ENCODE measurements at regions of chr3 and their contacts with region 1.

Region 1: GRCh38 chr3:49839193-49839809 is 17.1 kb downstream of the TRAIP start:
- DNase-seq: peak; percentile 75 to 81 (median 78)
- H3K4me3 ChIP-seq: no peak overlapping the region
- H3K4me3 Mint-ChIP-seq: no peak overlapping the region
- H3K27ac ChIP-seq: no peak overlapping the region
- H3K27ac Mint-ChIP-seq: no peak overlapping the region
- H3K4me1 ChIP-seq: no peaks in the 10 kb centered on the region
- H3K4me1 Mint-ChIP-seq: peaks cover 0 to 2% (median under 1%) of the 10 kb centered on the region in 4 donors
- H3K27me3 ChIP-seq: no peaks in the 10 kb centered on the region
- H3K27me3 Mint-ChIP-seq: no peaks in the 10 kb centered on the region

Region 2: DNA sequence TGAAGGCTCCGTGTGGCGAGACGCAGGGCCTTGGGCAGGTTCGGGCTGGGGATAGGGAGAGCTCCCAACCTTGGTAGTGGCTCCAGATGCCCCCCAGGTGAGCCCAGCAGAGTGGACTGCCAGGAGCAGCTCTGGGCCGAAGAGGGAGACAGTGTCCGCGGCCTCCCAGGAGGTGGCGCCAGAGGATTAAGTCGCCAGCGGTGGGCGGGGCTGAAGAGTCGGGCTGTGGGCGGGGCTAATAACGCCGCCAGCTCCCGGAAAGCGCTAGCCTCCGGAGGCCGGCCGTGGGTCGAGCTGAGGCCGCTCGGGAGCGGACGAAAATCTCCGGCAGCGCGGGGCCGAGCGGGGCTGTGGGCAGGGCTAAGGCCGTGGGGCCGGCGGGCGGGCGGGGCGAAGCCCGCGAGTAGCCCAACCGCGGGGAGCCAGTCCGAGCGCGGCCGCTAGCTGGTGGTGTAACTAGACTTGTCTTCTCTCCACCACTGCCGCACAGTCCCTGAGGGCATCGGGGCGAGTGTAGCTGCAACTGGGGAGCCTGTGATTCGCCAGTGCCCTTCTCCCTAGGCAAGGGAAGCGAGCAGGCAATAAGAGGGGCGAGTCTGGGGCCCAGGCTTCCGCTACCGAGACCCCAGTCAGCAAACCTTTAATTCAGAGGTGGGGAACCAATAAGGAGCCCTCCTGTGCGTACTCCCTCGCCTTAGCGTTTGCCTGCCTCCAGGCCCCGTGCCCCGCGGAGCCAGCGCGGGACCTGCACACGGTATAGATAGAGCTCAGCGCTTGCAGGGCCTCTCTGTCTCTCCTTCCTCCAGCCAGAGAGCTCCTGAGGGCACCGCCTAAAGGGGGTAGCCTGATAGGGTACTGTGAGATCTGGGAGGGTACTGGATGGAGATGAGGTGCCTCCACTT is 299.4 kb before region 1 on chr3:
- CTCF ChIA-PET with region 1: interaction called, 43 read pairs
- POLR2A ChIA-PET with region 1: interaction called, 4 read pairs
- intact Hi-C with region 1: loop called (anchors 1 kb)
- DNase-seq: peak; percentile 85 to 90 (median 86)
- H3K4me3 ChIP-seq: peak overlapping the region; percentile 61 to 64
- H3K4me3 Mint-ChIP-seq: peak overlapping the region; percentile 71 to 87 (median 82)
- H3K27ac ChIP-seq: peak overlapping the region; percentile 64
- H3K27ac Mint-ChIP-seq: peak overlapping the region in 6 of 7 donors; percentile 48 to 83 (median 56)
- H3K4me1 ChIP-seq: peaks cover 11% of the 10 kb centered on the region
- H3K4me1 Mint-ChIP-seq: peaks cover 2 to 8% (median 4%) of the 10 kb centered on the region in 4 donors
- H3K27me3 ChIP-seq: no peaks in the 10 kb centered on the region
- H3K27me3 Mint-ChIP-seq: peaks cover 4 to 5% of the 10 kb centered on the region in 2 donors

Region 3: GRCh38 chr3:49602877-49603411 is 236.4 kb before region 1 on chr3:
- CTCF ChIA-PET with region 1: no interaction called
- POLR2A ChIA-PET with region 1: no interaction called
- intact Hi-C with region 1: no loop called
- DNase-seq: peak; percentile 43 to 78 (median 53)
- H3K4me3 ChIP-seq: no peak overlapping the region
- H3K4me3 Mint-ChIP-seq: peak overlapping the region in 5 of 8 donors; percentile 1 to 66 (median 54)
- H3K27ac ChIP-seq: peak overlapping the region; percentile 38
- H3K27ac Mint-ChIP-seq: peak overlapping the region; percentile 73 to 94 (median 90)
- H3K4me1 ChIP-seq: peaks cover 18% of the 10 kb centered on the region
- H3K4me1 Mint-ChIP-seq: peaks cover 14 to 27% (median 19%) of the 10 kb centered on the region in 4 donors
- H3K27me3 ChIP-seq: no peaks in the 10 kb centered on the region
- H3K27me3 Mint-ChIP-seq: no peaks in the 10 kb centered on the region

Region 4: DNA sequence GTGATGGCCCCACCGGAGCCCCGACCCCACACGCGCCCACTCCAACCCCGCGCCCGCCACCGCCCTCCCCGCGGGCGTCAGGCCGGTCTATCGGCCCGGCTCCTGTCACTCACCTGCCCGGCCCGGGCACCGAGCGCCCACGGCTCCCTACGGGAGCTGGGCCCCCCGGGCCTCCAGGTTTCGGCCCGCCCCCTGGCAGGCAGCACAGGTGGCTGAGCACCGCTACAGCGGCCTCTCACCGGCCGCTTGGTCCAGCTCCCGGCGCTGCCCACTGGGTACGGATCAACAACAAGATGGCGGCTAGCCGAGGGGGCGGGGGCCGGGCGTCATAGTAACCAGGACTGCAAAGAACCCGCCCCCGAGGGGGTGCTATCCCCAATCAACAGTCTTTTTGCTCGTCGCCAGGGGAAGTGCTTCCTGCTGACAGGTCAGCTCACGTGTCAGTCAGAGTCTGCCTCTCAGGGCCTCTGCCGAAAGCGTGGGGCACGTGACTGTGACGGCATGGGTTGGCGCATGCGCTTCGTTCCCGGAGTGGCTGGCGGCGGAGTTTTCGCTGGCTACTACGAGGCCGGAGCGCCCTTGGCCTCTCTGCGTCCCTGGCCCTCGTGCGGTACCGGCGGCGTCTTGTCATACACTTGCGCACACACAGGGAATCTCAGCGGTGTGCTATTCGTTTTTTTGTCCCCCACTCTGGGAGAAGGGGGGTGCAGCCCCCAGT is 52.9 kb before region 1 on chr3 and contains the start of gene IP6K1:
- CTCF ChIA-PET with region 1: interaction called, 12 read pairs
- POLR2A ChIA-PET with region 1: no interaction called
- intact Hi-C with region 1: no loop called
- DNase-seq: peak; percentile 98 to 100 (median 99)
- H3K4me3 ChIP-seq: peak within 1 kb of the TSS; percentile 79 to 89
- H3K4me3 Mint-ChIP-seq: peak within 1 kb of the TSS; percentile 92 to 98 (median 92)
- H3K27ac ChIP-seq: peak within 1 kb of the TSS; percentile 89
- H3K27ac Mint-ChIP-seq: peak within 1 kb of the TSS; percentile 98 to 99 (median 99)
- H3K4me1 ChIP-seq: peaks cover 30% of the 10 kb centered on the region
- H3K4me1 Mint-ChIP-seq: peaks cover 18 to 47% (median 31%) of the 10 kb centered on the region in 4 donors
- H3K27me3 ChIP-seq: no peaks in the 10 kb centered on the region
- H3K27me3 Mint-ChIP-seq: peaks cover 0 to 2% of the 10 kb centered on the region in 2 donors
- total RNA-seq, gene IP6K1: 50.1 to 60.0 TPM

Region 5: GRCh38 chr3:49813497-49814174 is 25.7 kb before region 1 on chr3 and contains the start of gene UBA7:
- CTCF ChIA-PET with region 1: interaction called, 310 read pairs
- POLR2A ChIA-PET with region 1: interaction called, 121 read pairs
- intact Hi-C with region 1: no loop called
- DNase-seq: peak in 4 of 5 donors; percentile 43 to 56 (median 49)
- H3K4me3 ChIP-seq: peak within 1 kb of the TSS; percentile 60 to 82
- H3K4me3 Mint-ChIP-seq: peak within 1 kb of the TSS; percentile 94 to 99 (median 97)
- H3K27ac ChIP-seq: peak within 1 kb of the TSS; percentile 79
- H3K27ac Mint-ChIP-seq: peak within 1 kb of the TSS; percentile 93 to 98 (median 96)
- H3K4me1 ChIP-seq: peaks cover 30% of the 10 kb centered on the region
- H3K4me1 Mint-ChIP-seq: peaks cover 14 to 44% (median 27%) of the 10 kb centered on the region in 4 donors
- H3K27me3 ChIP-seq: no peaks in the 10 kb centered on the region
- H3K27me3 Mint-ChIP-seq: no peaks in the 10 kb centered on the region
- total RNA-seq, gene UBA7: 269 to 299 TPM

Region 6: GRCh38 chr3:49856181-49857005 is 17.1 kb after region 1 on chr3 and contains the start of gene TRAIP:
- CTCF ChIA-PET with region 1: interaction called, 19 read pairs
- POLR2A ChIA-PET with region 1: no interaction called
- intact Hi-C with region 1: no loop called
- DNase-seq: peak; percentile 92 to 95 (median 93)
- H3K4me3 ChIP-seq: peak within 1 kb of the TSS; percentile 39 to 56
- H3K4me3 Mint-ChIP-seq: peak within 1 kb of the TSS; percentile 84 to 92 (median 88)
- H3K27ac ChIP-seq: peak within 1 kb of the TSS; percentile 56
- H3K27ac Mint-ChIP-seq: peak within 1 kb of the TSS; percentile 81 to 95 (median 93)
- H3K4me1 ChIP-seq: peaks cover 13% of the 10 kb centered on the region
- H3K4me1 Mint-ChIP-seq: peaks cover 3 to 11% (median 7%) of the 10 kb centered on the region in 4 donors
- H3K27me3 ChIP-seq: no peaks in the 10 kb centered on the region
- H3K27me3 Mint-ChIP-seq: no peaks in the 10 kb centered on the region
- total RNA-seq, gene TRAIP: 4.6 to 6.7 TPM

Region 7: GRCh38 chr3:49929331-49930240 is 90.3 kb after region 1 on chr3 and contains the start of gene MON1A:
- CTCF ChIA-PET with region 1: interaction called, 10 read pairs
- POLR2A ChIA-PET with region 1: no interaction called
- intact Hi-C with region 1: no loop called
- DNase-seq: peak; percentile 76 to 87 (median 79)
- H3K4me3 ChIP-seq: peak within 1 kb of the TSS; percentile 95 to 98
- H3K4me3 Mint-ChIP-seq: peak within 1 kb of the TSS; percentile 81 to 88 (median 85)
- H3K27ac ChIP-seq: peak within 1 kb of the TSS; percentile 92
- H3K27ac Mint-ChIP-seq: peak within 1 kb of the TSS; percentile 76 to 94 (median 90)
- H3K4me1 ChIP-seq: peaks cover 23% of the 10 kb centered on the region
- H3K4me1 Mint-ChIP-seq: peaks cover 15 to 32% (median 26%) of the 10 kb centered on the region in 4 donors
- H3K27me3 ChIP-seq: no peaks in the 10 kb centered on the region
- H3K27me3 Mint-ChIP-seq: no peaks in the 10 kb centered on the region
- total RNA-seq, gene MON1A: 9.5 to 11.1 TPM

Measured in CD4-positive, alpha-beta memory T cell (primary cell).